ENCODE measurements at regions of chr18 and their contacts with region 1.

Region 1: GRCh38 chr18:31918733-31919132 is 24.2 kb downstream of the TRAPPC8 start:
- DNase-seq: no peak
- H3K4me3 ChIP-seq: no peak overlapping the region
- H3K27ac ChIP-seq: no peak overlapping the region
- H3K4me1 ChIP-seq: no peaks in the 10 kb centered on the region
- H3K27me3 ChIP-seq: no peaks in the 10 kb centered on the region
- CTCF ChIP-seq: no peak

Region 2: DNA sequence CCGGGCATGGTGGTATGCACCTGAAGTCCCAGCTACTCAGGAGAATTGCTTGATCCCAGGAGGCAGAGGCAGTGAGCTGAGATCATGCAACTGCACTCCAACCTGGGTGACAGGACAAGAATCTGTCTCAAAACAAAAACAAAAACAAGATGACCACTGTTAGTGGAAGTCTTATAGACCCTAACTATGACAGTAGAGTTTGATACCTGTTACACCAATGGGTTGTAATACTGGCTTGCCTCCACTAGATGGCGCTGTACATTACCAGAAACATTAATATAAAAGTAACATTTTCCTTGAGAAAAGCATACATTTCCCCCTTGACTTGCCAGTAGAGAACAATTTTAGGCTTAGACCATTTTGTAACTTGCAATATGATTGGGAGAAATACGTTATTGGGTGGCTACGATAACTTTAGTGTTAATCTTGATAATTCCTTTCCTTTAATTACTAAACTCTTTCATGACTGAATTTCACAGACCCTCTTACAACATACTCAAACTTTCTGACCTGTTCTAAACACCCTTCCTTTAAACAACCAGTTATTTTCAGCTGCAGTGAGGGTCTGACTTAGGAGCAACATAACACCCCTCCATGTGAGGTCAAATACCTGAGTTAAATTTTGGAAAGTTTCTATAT is 177.5 kb before region 1 on chr18:
- CTCF ChIA-PET with region 1: no interaction called
- POLR2A ChIA-PET with region 1: no interaction called
- intact Hi-C with region 1: no loop called
- DNase-seq: peak; percentile 62
- H3K4me3 ChIP-seq: no peak overlapping the region
- H3K27ac ChIP-seq: no peak overlapping the region
- H3K4me1 ChIP-seq: no peaks in the 10 kb centered on the region
- H3K27me3 ChIP-seq: no peaks in the 10 kb centered on the region
- CTCF ChIP-seq: peak; percentile 85

Region 3: DNA sequence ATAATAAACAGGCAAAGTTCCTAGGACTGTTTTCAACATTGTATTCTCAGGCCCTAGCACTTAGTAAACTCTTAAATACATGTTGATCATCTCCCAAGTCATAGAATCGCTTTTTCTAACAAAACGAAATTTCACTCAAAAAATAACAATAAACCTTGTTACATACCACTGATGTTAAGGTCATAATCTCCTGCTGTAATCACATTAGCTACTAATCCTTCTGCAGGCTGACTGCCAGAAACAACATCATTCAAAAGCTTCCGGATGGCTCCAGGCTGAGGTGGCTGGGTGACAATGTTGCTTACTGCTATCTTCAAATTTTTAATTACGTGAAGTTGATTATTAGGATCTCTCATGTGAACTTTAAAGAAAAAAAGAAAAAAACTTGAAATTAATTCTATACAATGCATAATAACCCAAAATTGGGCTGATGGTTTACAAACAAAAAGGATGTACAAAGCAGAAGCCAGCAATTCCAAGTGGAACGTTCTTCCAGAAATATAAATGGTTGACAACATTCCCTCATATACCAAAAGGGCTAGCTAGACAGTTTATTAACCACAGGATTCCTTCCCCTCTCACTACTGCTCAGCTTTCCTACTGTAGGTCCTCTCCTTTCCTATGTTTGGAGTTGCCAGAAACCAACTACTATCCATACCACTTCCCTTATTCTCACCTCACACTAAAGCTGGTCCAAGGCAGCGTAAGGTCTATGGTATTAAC is 12.6 kb after region 1 on chr18:
- CTCF ChIA-PET with region 1: no interaction called
- POLR2A ChIA-PET with region 1: no interaction called
- intact Hi-C with region 1: loop called (anchors 2 kb)
- DNase-seq: peak; percentile 91
- H3K4me3 ChIP-seq: no peak overlapping the region
- H3K27ac ChIP-seq: peak overlapping the region; percentile 52
- H3K4me1 ChIP-seq: peaks cover 22% of the 10 kb centered on the region
- H3K27me3 ChIP-seq: no peaks in the 10 kb centered on the region
- CTCF ChIP-seq: no peak

Region 4: DNA sequence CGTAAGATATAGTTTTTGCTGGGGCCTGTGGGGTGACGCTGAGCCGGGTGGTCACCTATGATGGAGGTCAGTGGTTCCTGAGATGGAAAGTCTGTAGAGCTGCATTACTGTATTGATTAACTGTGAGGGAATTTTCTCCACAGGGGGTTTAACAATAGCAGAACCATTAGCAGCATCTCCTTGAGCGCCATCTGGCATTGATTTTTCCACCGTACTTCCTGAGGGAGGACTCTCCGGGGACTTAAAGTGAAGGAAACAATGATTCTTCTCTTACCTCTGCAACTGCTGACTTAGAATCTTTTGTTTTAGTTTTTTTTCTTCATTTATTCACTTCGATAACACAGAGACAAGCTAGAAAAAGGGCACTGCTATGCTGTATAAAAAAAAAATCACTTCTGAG is 77.3 kb after region 1 on chr18:
- CTCF ChIA-PET with region 1: no interaction called
- POLR2A ChIA-PET with region 1: no interaction called
- intact Hi-C with region 1: no loop called
- DNase-seq: peak; percentile 20
- H3K4me3 ChIP-seq: no peak overlapping the region
- H3K27ac ChIP-seq: no peak overlapping the region
- H3K4me1 ChIP-seq: no peaks in the 10 kb centered on the region
- H3K27me3 ChIP-seq: no peaks in the 10 kb centered on the region
- CTCF ChIP-seq: no peak